ENCODE measurements at regions of chr1 and their contacts with region 1.

Region 1: GRCh38 chr1:165490175-165490574 is 45.2 kb upstream of the RXRG start:
- DNase-seq: peak in 4 of 5 donors; percentile 73 to 92 (median 82)
- ATAC-seq: peak; percentile 82 to 95 (median 92)
- H3K4me3 ChIP-seq: no peak overlapping the region
- H3K27ac ChIP-seq: peak overlapping the region in 7 of 12 donors; percentile 17 to 64 (median 51)
- H3K4me1 ChIP-seq: peaks cover 0 to 48% (median 19%) of the 10 kb centered on the region in 12 donors
- H3K27me3 ChIP-seq: no peaks in the 10 kb centered on the region
- CTCF ChIP-seq: no peak
- POLR2A ChIP-seq: no peak

Region 2: GRCh38 chr1:165409657-165410358 is 80.4 kb before region 1 on chr1:
- intact Hi-C with region 1: loop called in 2 of 10 experiments (anchors 5 kb)
- DNase-seq: peak in 4 of 5 donors; percentile 45 to 59 (median 55)
- ATAC-seq: peak; percentile 93 to 95 (median 94)
- H3K4me3 ChIP-seq: no peak overlapping the region
- H3K27ac ChIP-seq: peak overlapping the region in 1 of 12 donors; percentile 47
- H3K4me1 ChIP-seq: peaks cover 0 to 29% (median 6%) of the 10 kb centered on the region in 12 donors
- H3K27me3 ChIP-seq: no peaks in the 10 kb centered on the region
- CTCF ChIP-seq: no peak
- POLR2A ChIP-seq: no peak

Region 3: GRCh38 chr1:165424454-165425216 is 65.5 kb before region 1 on chr1:
- intact Hi-C with region 1: no loop called
- DNase-seq: peak; percentile 40 to 70 (median 47)
- ATAC-seq: peak; percentile 71 to 95 (median 89)
- H3K4me3 ChIP-seq: peak overlapping the region in 8 of 12 donors; percentile 3 to 42 (median 37)
- H3K27ac ChIP-seq: peak overlapping the region; percentile 17 to 80 (median 61)
- H3K4me1 ChIP-seq: peaks cover 0 to 37% (median 20%) of the 10 kb centered on the region in 12 donors
- H3K27me3 ChIP-seq: no peaks in the 10 kb centered on the region
- CTCF ChIP-seq: no peak
- POLR2A ChIP-seq: no peak

Region 4: DNA sequence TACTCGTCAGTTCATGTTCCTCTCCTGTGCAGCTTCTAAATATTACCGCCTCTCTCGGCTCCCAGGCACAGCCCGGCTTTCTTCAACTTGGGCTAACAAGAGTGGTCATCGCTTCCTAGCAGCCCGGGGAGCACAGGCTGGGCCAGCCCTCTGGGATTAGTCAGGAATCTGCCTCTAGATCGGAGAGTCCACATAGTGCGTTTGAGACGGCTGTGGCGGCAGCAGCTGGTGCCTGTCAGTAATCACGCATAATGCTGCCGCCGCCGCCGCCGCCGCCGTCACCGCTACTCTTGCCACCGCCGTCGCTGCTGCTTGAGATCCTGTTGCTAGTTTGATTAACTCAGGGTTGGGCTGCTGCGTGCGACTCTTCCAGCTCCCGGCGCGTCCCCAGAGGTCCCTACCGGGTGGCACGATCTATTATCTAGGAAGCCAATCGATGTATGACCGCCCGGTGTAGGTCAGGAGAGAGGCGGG is 45.2 kb before region 1 on chr1 and contains the start of gene RXRG:
- intact Hi-C with region 1: loop called in 3 of 10 experiments (anchors 5 kb)
- DNase-seq: peak; percentile 29 to 72 (median 52)
- ATAC-seq: peak; percentile 38 to 75 (median 70)
- H3K4me3 ChIP-seq: peak within 1 kb of the TSS; percentile 18 to 60 (median 50)
- H3K27ac ChIP-seq: peak within 1 kb of the TSS in 8 of 12 donors; percentile 12 to 76 (median 54)
- H3K4me1 ChIP-seq: peaks cover 0 to 26% (median 9%) of the 10 kb centered on the region in 12 donors
- H3K27me3 ChIP-seq: peaks cover 0 to 46% (median 0%) of the 10 kb centered on the region in 9 donors
- CTCF ChIP-seq: no peak
- POLR2A ChIP-seq: no peak
- total RNA-seq, gene RXRG: 1.1 to 11.4 (median 2.6) TPM

Region 5: DNA sequence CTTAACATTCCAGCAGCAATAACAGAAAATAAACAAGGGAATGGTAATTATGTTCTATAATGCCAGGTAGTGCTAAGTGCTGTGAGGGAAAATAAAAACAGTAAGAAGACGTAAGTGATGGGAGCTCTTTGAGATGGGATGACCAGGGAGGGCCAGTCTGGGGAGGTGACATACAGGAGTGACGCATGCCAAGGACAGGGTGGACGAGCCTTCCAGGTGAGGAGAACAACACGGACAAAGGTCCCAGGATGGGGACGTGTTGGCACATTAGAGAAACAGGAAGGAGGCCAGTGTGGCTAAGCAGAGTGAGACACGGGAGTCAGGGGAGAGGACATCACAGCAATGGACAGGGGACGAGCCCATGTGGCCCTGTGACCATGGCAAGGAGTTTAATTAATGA is 41.9 kb after region 1 on chr1:
- intact Hi-C with region 1: no loop called
- DNase-seq: no peak
- ATAC-seq: peak in 1 of 4 donors; percentile 7
- H3K4me3 ChIP-seq: no peak overlapping the region
- H3K27ac ChIP-seq: peak overlapping the region in 2 of 12 donors; percentile 50 to 52
- H3K4me1 ChIP-seq: peaks cover 0 to 35% (median 5%) of the 10 kb centered on the region in 12 donors
- H3K27me3 ChIP-seq: no peaks in the 10 kb centered on the region
- CTCF ChIP-seq: no peak
- POLR2A ChIP-seq: no peak